ENCODE measurements at regions of chr21 and their contacts with region 1.

Region 1: GRCh38 chr21:25708467-25709065 is 26.1 kb downstream of the ATP5PF start:
- DNase-seq: no peak

Region 2: DNA sequence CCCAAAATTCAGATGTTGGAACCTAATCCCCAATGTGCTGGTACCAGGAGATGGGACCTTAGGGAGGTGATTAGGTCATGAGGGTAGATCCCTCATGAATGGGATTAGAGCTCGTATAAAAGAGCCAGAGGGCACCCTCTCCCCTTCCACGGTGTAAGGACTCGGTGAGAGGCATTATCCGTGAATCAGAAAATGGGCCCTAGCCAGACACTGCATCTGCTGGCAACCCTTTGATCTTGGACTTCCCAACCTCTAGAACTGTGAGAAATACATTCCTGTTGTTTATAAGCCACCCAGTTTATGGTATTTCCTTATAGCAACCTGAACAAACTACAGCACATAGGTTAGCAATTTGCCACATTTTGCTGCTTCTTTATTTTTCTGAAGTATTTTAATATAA is 84.1 kb before region 1 on chr21:
- intact Hi-C with region 1: loop called (anchors 5 kb)
- DNase-seq: no peak

Region 3: GRCh38 chr21:25639551-25640201 is 68.9 kb before region 1 on chr21:
- intact Hi-C with region 1: loop called (anchors 2 kb)
- DNase-seq: no peak

Region 4: GRCh38 chr21:26019236-26019635 is 310.7 kb after region 1 on chr21:
- intact Hi-C with region 1: no loop called
- DNase-seq: no peak